Common myeloid progenitor, CD34-positive (primary cell): ENCODE measurements at regions of chr11 and their contacts with region 1.

Region 1: GRCh38 chr11:47499614-47500013 is 50.7 kb upstream of the RAPSN start:
- DNase-seq: no peak
- H3K4me3 ChIP-seq: peak overlapping the region in 2 of 7 experiments; percentile 30 to 42
- H3K27ac ChIP-seq: peak overlapping the region; percentile 29 to 68
- H3K4me1 ChIP-seq: peaks cover 19 to 36% (median 20%) of the 10 kb centered on the region in 4 experiments
- H3K27me3 ChIP-seq: no peaks in the 10 kb centered on the region

Region 2: GRCh38 chr11:47348859-47349258 is 150.8 kb before region 1 on chr11:
- CTCF ChIA-PET with region 1: no interaction called
- POLR2A ChIA-PET with region 1: no interaction called
- DNase-seq: peak; percentile 31 to 61 (median 59)
- H3K4me3 ChIP-seq: no peak overlapping the region
- H3K27ac ChIP-seq: no peak overlapping the region
- H3K4me1 ChIP-seq: no peaks in the 10 kb centered on the region
- H3K27me3 ChIP-seq: no peaks in the 10 kb centered on the region

Region 3: GRCh38 chr11:47477323-47477722 is 22.3 kb before region 1 on chr11:
- CTCF ChIA-PET with region 1: no interaction called
- POLR2A ChIA-PET with region 1: no interaction called
- DNase-seq: peak in 2 of 3 donors; percentile 20 to 37
- H3K4me3 ChIP-seq: no peak overlapping the region
- H3K27ac ChIP-seq: no peak overlapping the region
- H3K4me1 ChIP-seq: no peaks in the 10 kb centered on the region
- H3K27me3 ChIP-seq: no peaks in the 10 kb centered on the region

Region 4: GRCh38 chr11:47488674-47489394 is 10.8 kb before region 1 on chr11:
- CTCF ChIA-PET with region 1: interaction called, 22 read pairs
- POLR2A ChIA-PET with region 1: no interaction called
- DNase-seq: no peak
- H3K4me3 ChIP-seq: no peak overlapping the region
- H3K27ac ChIP-seq: no peak overlapping the region
- H3K4me1 ChIP-seq: no peaks in the 10 kb centered on the region
- H3K27me3 ChIP-seq: no peaks in the 10 kb centered on the region